Breast epithelium (tissue), 4 donors: ENCODE measurements at regions of chr5 and their contacts with region 1.

Region 1: DNA sequence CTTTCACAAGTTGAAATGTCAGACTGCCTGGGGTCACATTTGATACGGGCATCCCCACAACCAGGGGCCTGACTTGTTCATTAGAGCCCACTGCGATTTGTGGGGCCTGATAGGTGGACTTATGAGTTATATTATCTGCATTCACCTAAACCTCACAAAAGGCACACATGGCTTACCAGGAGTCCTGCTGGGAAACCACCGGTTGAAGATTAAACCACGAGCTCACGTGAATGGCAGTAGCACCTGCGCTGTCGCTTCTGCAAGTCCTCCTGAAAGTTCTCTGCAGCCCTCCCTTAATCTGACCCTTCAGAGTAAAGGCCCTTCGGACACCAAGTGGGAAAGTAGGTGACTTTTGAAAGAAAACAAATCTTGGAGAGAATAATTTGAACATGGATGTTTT is 68.9 kb downstream of the PPIC start:
- DNase-seq: no peak
- H3K4me3 ChIP-seq: no peak overlapping the region
- H3K27ac ChIP-seq: no peak overlapping the region
- H3K4me1 ChIP-seq: no peaks in the 10 kb centered on the region
- H3K27me3 ChIP-seq: no peaks in the 10 kb centered on the region
- CTCF ChIP-seq: no peak
- POLR2A ChIP-seq: no peak

Region 2: DNA sequence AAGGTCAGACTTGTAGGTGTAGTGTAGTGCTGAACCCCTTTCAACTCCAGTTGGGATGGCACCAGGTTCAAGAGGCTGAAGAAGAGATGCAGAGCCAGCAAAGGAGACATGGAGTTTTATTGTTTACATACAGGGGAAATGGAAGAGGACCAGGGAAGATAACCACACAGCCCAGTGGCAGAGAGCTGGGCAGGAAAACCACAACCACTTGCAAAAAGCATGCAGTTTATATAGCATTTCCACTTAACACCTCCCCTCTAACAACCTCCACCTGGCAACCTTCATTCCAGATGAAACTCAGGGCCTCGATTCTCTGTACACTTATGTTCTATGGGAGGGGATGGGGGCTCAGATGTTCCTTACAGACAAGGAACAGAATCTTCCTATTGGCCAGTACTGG is 65.4 kb before region 1 on chr5:
- intact Hi-C with region 1: loop called (anchors 2 kb)
- DNase-seq: no peak
- H3K4me3 ChIP-seq: no peak overlapping the region
- H3K27ac ChIP-seq: no peak overlapping the region
- H3K4me1 ChIP-seq: no peaks in the 10 kb centered on the region
- H3K27me3 ChIP-seq: no peaks in the 10 kb centered on the region
- CTCF ChIP-seq: no peak
- POLR2A ChIP-seq: no peak